ENCODE measurements at regions of chr10 and their contacts with region 1.

Region 1: GRCh38 chr10:71756311-71757191 is 16.8 kb downstream of the VSIR start:
- DNase-seq: no peak
- H3K4me3 Mint-ChIP-seq: peak overlapping the region; percentile 21
- H3K27ac Mint-ChIP-seq: peak overlapping the region; percentile 87
- H3K4me1 Mint-ChIP-seq: peaks cover 78% of the 10 kb centered on the region
- H3K27me3 Mint-ChIP-seq: no peaks in the 10 kb centered on the region

Region 2: DNA sequence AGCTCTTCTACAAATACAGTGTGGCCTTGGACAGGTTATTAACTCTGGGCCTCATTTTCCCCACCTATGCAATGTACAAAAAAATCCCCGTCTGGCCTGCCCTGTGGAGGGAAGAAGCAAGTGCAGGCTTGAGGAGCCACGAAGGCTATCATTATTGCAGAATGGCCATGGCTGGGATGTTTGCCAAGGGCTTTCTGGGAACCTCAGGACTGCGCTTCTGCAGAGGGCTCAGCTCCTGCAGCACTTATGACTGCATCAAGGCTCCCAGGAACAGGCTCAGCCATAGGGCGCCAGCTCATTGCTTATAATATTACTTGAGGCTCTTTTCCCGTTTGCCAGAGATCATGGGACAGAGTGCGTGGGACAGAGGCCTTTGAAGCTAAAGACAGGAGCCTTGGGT is 16.5 kb before region 1 on chr10:
- CTCF ChIA-PET with region 1: no interaction called
- POLR2A ChIA-PET with region 1: interaction called, 50 read pairs
- DNase-seq: no peak
- H3K4me3 Mint-ChIP-seq: no peak overlapping the region
- H3K27ac Mint-ChIP-seq: no peak overlapping the region
- H3K4me1 Mint-ChIP-seq: peaks cover 90% of the 10 kb centered on the region
- H3K27me3 Mint-ChIP-seq: no peaks in the 10 kb centered on the region

Region 3: DNA sequence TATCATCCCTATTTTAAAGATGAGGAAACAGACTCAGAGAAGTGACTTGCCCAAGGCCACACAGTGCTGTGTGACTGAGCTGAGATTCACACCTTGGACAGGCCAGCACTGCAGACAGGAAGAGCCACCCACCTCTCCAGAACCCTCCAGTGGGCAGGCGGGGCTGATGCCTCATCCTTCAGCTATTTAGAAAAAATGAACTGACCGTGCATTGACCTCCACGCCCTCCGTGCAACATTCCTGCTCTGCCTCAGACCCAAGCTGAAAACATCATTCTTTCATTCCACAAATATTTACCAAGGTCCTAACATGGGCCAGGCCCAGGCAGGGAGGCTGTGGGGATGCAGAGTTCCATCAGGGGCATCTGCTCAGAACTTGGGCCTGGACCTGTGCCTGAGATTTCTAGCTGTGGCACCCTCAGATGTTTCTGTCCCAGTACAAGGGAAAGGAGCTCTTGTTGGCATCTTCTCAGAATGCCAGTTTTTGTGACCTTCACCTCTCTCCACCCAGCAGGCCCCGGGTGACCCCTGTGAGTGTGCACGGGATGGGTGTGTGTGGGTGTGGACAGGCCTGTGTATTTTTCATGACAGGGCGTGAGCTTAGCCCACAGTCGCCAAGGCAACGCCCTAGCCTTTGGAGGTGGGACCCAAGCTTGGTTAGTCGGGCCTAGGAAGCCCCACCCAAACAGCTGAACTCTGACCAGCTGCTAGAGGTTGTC is 10.3 kb after region 1 on chr10:
- CTCF ChIA-PET with region 1: interaction called, 42 read pairs
- POLR2A ChIA-PET with region 1: interaction called, 142 read pairs
- DNase-seq: peak; percentile 67
- H3K4me3 Mint-ChIP-seq: peak overlapping the region; percentile 57
- H3K27ac Mint-ChIP-seq: peak overlapping the region; percentile 91
- H3K4me1 Mint-ChIP-seq: peaks cover 85% of the 10 kb centered on the region
- H3K27me3 Mint-ChIP-seq: no peaks in the 10 kb centered on the region

Measured in activated CD4-positive, alpha-beta memory T cell treated with anti-CD3 and anti-CD28 coated beads, Interleukin-2, amount 10 ng/mL, durations not matched to agents 7 days and 5 days (primary cell).